ENCODE measurements at regions of chr16 and their contacts with region 1.

Region 1: GRCh38 chr16:84484579-84485254 is 19.7 kb downstream of the MEAK7 start:
- H3K4me3 ChIP-seq: no peak overlapping the region
- H3K27ac ChIP-seq: no peak overlapping the region
- H3K4me1 ChIP-seq: no peaks in the 10 kb centered on the region
- CTCF ChIP-seq: peak; percentile 79

Region 2: DNA sequence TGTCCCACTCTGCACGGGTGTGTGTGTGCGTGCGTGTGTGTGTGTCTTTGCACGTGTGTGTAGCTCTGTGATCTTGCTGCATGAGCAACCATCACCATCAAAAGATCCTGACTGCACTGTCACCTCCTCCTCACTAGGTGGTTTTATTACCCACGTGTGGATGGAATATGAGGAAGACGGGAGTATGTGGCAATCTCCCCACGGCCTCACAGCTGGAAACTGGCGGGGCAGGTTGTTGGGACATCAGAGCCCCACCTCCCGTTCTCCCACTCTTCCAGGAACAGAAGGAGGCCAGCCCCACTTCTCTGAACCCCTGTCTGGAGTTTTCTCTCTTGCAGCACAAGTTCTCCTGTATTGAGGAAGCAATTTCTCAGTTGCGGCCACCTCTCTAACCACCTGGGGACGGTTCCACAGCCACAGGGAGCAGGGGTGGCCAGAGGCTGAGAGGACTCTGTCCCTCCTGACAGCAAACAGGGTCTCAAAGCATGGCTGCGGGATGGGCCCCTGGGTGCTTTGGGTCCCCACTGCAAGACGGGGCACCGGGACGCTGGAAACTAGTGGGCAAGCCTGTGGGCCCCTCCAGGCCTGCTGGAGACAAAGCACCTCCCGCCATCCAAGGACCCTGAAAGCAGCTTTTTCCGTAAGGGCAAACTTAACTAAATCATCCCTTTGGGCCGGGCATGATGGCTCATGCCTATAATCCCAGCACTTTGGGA is 144.2 kb before region 1 on chr16:
- CTCF ChIA-PET with region 1: no interaction called
- POLR2A ChIA-PET with region 1: no interaction called
- H3K4me3 ChIP-seq: no peak overlapping the region
- H3K27ac ChIP-seq: no peak overlapping the region
- H3K4me1 ChIP-seq: no peaks in the 10 kb centered on the region
- CTCF ChIP-seq: no peak

Region 3: DNA sequence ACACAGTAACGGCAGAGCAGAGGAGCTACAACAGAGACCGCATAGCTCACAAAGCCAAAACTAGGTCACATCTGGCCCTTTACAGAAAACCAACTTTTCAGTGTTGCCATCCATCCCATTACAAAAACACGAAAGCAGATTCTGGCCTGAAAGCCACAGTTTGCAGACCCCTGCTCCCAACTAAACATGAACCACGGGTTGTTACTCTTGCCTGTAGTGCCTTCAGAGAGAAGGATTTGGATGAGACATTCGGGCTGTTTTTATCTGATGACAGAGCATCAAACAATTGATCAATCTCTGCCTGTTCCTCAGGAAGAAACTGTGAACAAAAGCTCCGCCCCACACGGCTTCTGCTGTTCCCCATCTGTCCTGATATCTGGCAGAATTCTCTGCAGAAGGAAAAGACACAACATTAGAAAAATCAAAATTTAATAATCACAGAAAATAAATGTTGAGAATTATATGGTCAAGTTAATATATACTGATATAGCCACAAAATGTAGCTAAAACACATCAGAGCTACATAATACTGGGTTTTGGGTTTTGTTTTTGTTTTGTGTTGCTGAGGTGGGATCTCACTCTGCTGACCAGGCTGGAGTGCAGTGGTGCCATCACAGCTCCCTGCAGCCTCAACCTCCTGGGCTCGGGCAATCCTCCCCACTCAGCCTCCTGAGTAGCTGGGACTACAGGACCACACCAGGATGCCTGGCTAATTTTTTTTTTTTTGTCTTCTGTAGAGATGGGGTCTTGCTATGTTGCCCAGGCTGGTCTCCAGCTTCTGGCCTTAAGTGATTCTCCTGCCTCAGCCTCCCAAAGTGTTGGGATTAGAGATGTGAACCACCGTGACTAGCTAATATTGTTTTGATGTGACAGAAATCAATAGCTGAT is 13.2 kb after region 1 on chr16:
- CTCF ChIA-PET with region 1: interaction called, 13 read pairs
- POLR2A ChIA-PET with region 1: no interaction called
- H3K4me3 ChIP-seq: no peak overlapping the region
- H3K27ac ChIP-seq: no peak overlapping the region
- H3K4me1 ChIP-seq: peaks cover 2% of the 10 kb centered on the region; the same call in 1 of the 2 replicates
- CTCF ChIP-seq: no peak